GM10248 (cell line): ENCODE measurements at regions of chr9 and their contacts with region 1.

Region 1: DNA sequence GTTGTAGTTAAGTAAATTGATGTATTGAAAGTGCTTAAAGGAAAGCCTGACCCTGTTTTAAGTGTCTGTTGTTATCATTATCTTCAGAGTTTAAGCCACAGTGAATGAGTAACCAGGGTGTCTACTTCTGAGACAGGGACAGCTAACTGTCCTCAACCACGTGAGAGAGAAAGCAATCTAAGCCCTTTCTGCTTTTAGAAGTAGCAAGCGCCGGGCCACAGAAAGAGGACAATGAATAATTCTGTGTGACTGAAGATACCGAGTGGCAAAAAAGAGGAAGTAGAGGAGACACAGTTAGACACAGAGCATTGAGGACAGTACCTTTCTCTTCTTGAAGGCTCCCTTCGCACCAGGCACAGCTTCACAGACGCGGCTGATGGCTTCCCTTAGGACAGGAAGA is 86.3 kb downstream of the S1PR3 start:
- DNase-seq: peak; percentile 51
- CTCF ChIP-seq: no peak

Region 2: GRCh38 chr9:89213396-89213880 is 135.9 kb after region 1 on chr9:
- CTCF ChIA-PET with region 1: no interaction called
- POLR2A ChIA-PET with region 1: interaction called, 10 read pairs
- DNase-seq: no peak
- CTCF ChIP-seq: no peak